PC-3 (cell line): ENCODE measurements at regions of chr3 and their contacts with region 1.

Region 1: DNA sequence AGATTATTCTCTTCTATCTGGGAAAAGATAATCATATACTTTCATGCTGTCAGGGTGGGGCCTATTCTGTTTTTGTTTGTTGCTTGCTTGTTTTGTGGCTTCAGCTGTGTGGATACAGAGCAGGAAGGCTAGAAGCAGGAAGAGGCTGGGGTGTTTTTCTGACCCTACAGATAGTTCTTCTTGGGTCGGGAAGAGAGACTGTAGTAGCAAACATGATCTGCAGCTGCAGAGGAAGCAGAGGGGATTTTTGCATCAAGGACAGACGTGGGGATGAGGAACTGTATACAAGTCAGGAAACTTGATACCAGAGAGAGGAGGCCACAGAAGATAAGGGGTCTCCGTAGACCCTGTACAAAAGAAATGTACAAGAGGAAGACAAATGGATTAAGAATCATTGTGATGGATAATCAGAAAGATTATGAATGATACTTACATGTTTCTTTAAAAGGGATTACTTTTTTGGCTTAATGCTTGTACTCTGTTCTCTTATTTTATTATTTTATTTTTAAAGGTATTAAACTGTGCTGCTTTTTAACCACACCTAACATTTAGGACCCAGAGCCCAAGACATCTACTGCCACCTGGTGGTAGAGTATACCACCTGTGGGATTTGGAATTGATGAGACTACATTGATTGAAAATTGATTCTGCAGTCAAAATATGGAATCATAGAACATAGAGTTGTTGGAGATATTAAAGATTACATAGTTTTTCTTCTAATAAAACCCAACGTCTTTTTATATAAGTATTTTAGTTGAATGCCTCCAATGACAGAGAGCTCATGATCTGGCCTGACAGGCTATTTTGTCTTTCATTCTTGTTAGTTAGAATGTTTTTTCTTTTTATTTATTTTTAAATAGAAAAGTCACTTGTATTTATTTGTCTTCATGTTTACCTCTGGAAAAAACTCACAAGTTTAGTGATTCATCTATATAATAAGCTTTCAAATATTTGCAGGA is 87.3 kb upstream of the ROPN1 start:
- DNase-seq: peak; percentile 72
- ATAC-seq: peak; percentile 64
- H3K4me3 ChIP-seq: no peak overlapping the region
- H3K27ac ChIP-seq: no peak overlapping the region
- H3K4me1 ChIP-seq: no peaks in the 10 kb centered on the region
- H3K27me3 ChIP-seq: peaks cover 21% of the 10 kb centered on the region
- CTCF ChIP-seq: peak; percentile 84

Region 2: GRCh38 chr3:123431658-123432324 is 647.4 kb before region 1 on chr3:
- CTCF ChIA-PET with region 1: no interaction called
- POLR2A ChIA-PET with region 1: no interaction called
- intact Hi-C with region 1: no loop called
- DNase-seq: no peak
- ATAC-seq: no peak
- H3K4me3 ChIP-seq: no peak overlapping the region
- H3K27ac ChIP-seq: no peak overlapping the region
- H3K4me1 ChIP-seq: no peaks in the 10 kb centered on the region
- H3K27me3 ChIP-seq: peaks cover 84% of the 10 kb centered on the region
- CTCF ChIP-seq: no peak

Region 3: DNA sequence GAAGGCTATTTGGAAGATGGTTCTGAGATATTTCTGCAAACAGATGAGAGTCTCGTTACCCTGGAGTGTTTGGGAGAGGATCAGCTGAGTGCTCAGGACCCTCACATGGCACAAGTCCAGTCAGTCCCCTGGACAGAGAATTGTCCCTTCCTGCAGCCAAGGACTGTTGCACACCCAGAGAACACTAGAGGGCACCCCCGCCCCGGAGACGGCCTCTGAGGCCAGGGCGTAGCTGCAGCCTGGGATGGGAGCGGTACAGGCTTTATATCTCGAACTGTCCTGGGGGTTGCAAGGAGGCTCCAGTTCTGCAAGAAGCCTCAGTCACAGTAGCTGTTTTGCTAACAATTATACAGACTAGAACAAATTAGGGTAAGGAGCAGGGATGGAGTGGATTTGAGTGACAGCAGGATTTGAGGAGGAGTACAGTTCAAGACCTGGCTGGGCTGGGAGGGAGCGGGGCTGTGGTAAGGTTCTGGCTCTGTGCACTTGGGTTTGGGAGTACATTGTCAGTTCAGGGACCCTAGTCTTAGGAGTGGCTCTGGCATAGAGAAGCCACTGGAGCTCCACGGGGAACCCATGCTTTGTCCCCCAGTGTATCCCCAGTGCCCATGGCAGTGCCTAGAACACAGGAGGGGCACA is 426.8 kb before region 1 on chr3:
- CTCF ChIA-PET with region 1: no interaction called
- POLR2A ChIA-PET with region 1: no interaction called
- intact Hi-C with region 1: loop called (anchors 5 kb)
- DNase-seq: peak; percentile 87
- ATAC-seq: peak; percentile 94
- H3K4me3 ChIP-seq: no peak overlapping the region
- H3K27ac ChIP-seq: no peak overlapping the region
- H3K4me1 ChIP-seq: 0 out of 2 replicates have a peak, but pooled peaks cover under 1% of the 10 kb centered on the region
- H3K27me3 ChIP-seq: no peaks in the 10 kb centered on the region
- CTCF ChIP-seq: peak; percentile 99

Region 4: DNA sequence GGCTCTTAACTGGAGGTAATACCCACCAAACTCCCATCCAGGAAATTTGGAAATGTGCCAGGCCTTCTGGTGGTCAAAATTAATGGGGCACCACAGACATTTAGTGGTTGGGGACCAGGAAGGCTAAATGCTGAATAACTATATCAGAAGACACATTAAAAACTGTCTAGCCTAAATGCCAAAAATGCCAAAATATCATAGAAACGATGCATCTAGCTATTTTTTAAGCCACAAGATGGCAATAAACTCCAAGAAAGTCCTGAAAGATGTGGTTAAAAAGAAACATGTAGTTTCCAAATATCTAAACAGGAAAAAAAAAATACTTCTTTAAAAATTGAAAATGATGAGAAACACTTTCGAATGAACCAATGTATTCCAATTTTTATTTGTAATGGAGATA is 138.1 kb before region 1 on chr3:
- CTCF ChIA-PET with region 1: interaction called, 3 read pairs
- POLR2A ChIA-PET with region 1: no interaction called
- intact Hi-C with region 1: loop called (anchors 1 kb)
- DNase-seq: no peak
- ATAC-seq: no peak
- H3K4me3 ChIP-seq: no peak overlapping the region
- H3K27ac ChIP-seq: no peak overlapping the region
- H3K4me1 ChIP-seq: no peaks in the 10 kb centered on the region
- H3K27me3 ChIP-seq: no peaks in the 10 kb centered on the region
- CTCF ChIP-seq: peak; percentile 48

Region 5: GRCh38 chr3:123986427-123986826 is 92.8 kb before region 1 on chr3:
- CTCF ChIA-PET with region 1: no interaction called
- POLR2A ChIA-PET with region 1: no interaction called
- intact Hi-C with region 1: no loop called
- DNase-seq: no peak
- ATAC-seq: no peak
- H3K4me3 ChIP-seq: no peak overlapping the region
- H3K27ac ChIP-seq: no peak overlapping the region
- H3K4me1 ChIP-seq: no peaks in the 10 kb centered on the region
- H3K27me3 ChIP-seq: peaks cover 73% of the 10 kb centered on the region
- CTCF ChIP-seq: no peak

Region 6: GRCh38 chr3:124014366-124014942 is 64.8 kb before region 1 on chr3:
- CTCF ChIA-PET with region 1: no interaction called
- POLR2A ChIA-PET with region 1: no interaction called
- intact Hi-C with region 1: loop called (anchors 1 kb)
- DNase-seq: peak; percentile 16
- ATAC-seq: peak; percentile 31; the same call in 1 of the 2 replicates
- H3K4me3 ChIP-seq: no peak overlapping the region
- H3K27ac ChIP-seq: no peak overlapping the region
- H3K4me1 ChIP-seq: no peaks in the 10 kb centered on the region
- H3K27me3 ChIP-seq: peaks cover 20% of the 10 kb centered on the region
- CTCF ChIP-seq: no peak

Region 7: DNA sequence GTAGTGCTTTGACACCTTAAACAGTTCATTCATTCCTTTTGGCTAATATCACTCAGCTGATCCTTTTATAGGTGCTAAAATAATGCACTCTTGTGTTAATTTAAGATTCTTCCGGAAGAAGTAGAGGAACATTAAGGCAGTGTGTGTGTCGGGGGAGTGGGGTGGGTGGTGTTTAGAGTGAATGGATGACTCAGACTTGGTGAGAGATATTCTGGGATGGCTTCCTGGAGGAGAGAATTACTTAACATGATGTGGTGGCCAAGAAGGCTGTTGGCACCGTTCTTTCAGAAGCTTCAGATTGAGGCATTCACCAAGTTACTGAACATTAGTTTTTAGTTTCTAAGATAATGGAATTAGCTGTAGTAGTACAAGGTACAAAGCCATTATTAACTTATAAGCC is 38.3 kb after region 1 on chr3:
- CTCF ChIA-PET with region 1: no interaction called
- POLR2A ChIA-PET with region 1: no interaction called
- intact Hi-C with region 1: loop called (anchors 1 kb)
- DNase-seq: peak; percentile 73
- ATAC-seq: peak; percentile 16; the same call in 1 of the 2 replicates
- H3K4me3 ChIP-seq: no peak overlapping the region
- H3K27ac ChIP-seq: peak overlapping the region; percentile 95
- H3K4me1 ChIP-seq: peaks cover 35% of the 10 kb centered on the region
- H3K27me3 ChIP-seq: no peaks in the 10 kb centered on the region
- CTCF ChIP-seq: no peak

Region 8: DNA sequence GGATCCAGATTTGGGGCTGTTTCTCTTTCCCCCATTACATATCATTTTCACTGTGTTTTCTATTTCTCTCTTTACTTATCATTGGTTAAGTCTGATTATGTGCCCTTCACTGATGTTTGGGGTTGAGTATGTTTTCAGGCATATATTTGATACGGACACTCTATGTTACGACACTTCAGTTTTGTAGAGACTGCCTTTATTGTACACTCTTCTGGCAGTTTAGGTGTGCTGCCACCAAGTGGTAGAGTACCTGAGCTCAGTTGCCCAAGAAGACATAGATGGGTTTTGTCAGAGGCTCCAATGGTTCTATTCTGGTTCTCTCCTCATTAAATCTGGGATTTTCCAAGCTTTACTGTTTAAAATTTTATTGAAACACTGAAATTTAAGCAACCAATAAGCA is 167.7 kb after region 1 on chr3:
- CTCF ChIA-PET with region 1: no interaction called
- POLR2A ChIA-PET with region 1: no interaction called
- intact Hi-C with region 1: loop called (anchors 2 kb)
- DNase-seq: peak; percentile 62
- ATAC-seq: peak; percentile 61
- H3K4me3 ChIP-seq: no peak overlapping the region
- H3K27ac ChIP-seq: no peak overlapping the region
- H3K4me1 ChIP-seq: peaks cover 14% of the 10 kb centered on the region
- H3K27me3 ChIP-seq: 0 out of 2 replicates have a peak, but pooled peaks cover 4% of the 10 kb centered on the region
- CTCF ChIP-seq: peak; percentile 88

Region 9: DNA sequence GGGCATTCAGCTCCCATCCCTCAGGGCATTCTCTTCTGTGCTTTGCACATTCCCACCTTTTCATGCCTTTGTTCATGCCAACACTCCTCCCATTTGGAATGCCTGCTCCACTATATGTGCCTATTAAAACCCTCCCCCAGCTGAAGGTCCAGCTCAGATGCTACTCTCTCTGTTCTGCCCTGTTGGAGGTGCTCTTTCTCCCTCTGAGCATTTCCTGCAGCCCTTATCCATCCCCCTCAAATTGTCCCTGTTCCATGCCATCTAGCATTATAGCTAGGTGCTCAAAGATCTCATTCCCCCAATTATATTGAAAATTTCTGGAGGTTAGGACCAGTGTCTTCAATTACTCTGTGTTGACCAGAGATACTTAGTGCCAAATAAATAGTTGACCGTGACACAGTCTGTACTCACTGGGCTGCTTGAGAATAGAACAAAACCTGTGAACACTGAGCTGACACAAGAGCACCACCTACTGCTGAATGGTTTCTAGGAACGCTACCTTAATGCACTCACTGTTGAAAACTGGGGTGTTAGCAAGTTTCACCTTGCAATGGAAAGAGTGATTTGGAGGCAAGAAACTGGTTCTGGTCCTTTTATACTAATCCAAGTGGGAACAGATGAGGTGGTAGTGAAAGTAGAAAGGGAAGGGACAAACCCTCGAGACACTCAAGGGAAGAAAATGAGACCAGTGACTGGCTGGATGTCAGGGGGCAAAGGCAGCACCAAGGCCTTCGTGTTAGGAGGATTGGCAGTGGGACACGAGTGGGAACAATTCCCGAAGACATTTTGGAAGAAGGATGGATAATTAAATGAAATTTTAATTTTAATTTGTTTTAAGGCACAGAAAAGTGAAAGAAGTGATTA is 202.5 kb after region 1 on chr3:
- CTCF ChIA-PET with region 1: interaction called, 10 read pairs
- POLR2A ChIA-PET with region 1: no interaction called
- intact Hi-C with region 1: loop called (anchors 1 kb)
- DNase-seq: peak; percentile 74
- ATAC-seq: peak; percentile 91
- H3K4me3 ChIP-seq: no peak overlapping the region
- H3K27ac ChIP-seq: no peak overlapping the region
- H3K4me1 ChIP-seq: no peaks in the 10 kb centered on the region
- H3K27me3 ChIP-seq: peaks cover 20% of the 10 kb centered on the region
- CTCF ChIP-seq: peak; percentile 96

Region 10: GRCh38 chr3:124427281-124427680 is 348.0 kb after region 1 on chr3:
- CTCF ChIA-PET with region 1: no interaction called
- POLR2A ChIA-PET with region 1: no interaction called
- intact Hi-C with region 1: no loop called
- DNase-seq: no peak
- ATAC-seq: no peak
- H3K4me3 ChIP-seq: no peak overlapping the region
- H3K27ac ChIP-seq: no peak overlapping the region
- H3K4me1 ChIP-seq: peaks cover 28% of the 10 kb centered on the region
- H3K27me3 ChIP-seq: no peaks in the 10 kb centered on the region
- CTCF ChIP-seq: no peak